ENCODE measurements at regions of chr7 and their contacts with region 1.

Region 1: GRCh38 chr7:92833024-92833765 is 3.2 kb downstream of the CDK6 start:
- DNase-seq: peak; percentile 88
- H3K4me3 ChIP-seq: peak overlapping the region; percentile 88
- H3K27ac ChIP-seq: peak overlapping the region; percentile 87
- H3K4me1 ChIP-seq: peaks cover 42% of the 10 kb centered on the region
- H3K27me3 ChIP-seq: no peaks in the 10 kb centered on the region

Region 2: DNA sequence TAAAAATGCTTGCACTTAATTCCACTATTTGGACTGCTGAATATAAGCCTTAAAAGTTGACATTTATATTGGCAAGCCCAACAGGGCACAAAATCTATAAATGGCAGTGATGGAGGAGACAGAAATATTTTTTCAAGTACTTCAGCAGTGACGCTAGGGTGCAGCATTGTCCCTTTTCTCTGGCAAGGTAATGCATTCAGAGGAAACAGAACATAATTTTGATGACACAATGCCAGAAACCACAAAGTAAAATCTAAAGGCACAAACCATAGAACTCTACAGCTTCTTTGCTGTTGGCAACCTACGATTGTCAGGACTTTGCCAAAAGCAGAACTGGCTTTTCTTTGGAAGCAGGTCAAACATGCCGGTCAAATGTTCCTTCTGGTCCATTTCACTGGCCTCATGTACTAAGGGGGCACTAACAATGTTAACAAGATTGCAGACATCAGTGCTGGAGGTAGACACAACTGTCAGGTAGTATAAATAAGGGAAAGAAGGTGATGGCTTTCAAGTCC is 212.1 kb before region 1 on chr7:
- in situ Hi-C with region 1: loop called (anchors 10 kb)
- DNase-seq: peak; percentile 89
- H3K4me3 ChIP-seq: no peak overlapping the region
- H3K27ac ChIP-seq: peak overlapping the region; percentile 7; the same call in 1 of the 2 replicates
- H3K4me1 ChIP-seq: peaks cover 25% of the 10 kb centered on the region
- H3K27me3 ChIP-seq: no peaks in the 10 kb centered on the region

Region 3: GRCh38 chr7:92691578-92691977 is 141.6 kb before region 1 on chr7:
- in situ Hi-C with region 1: loop called (anchors 10 kb)
- DNase-seq: peak; percentile 77
- H3K4me3 ChIP-seq: no peak overlapping the region
- H3K27ac ChIP-seq: no peak overlapping the region
- H3K4me1 ChIP-seq: peaks cover 21% of the 10 kb centered on the region
- H3K27me3 ChIP-seq: no peaks in the 10 kb centered on the region

Region 4: DNA sequence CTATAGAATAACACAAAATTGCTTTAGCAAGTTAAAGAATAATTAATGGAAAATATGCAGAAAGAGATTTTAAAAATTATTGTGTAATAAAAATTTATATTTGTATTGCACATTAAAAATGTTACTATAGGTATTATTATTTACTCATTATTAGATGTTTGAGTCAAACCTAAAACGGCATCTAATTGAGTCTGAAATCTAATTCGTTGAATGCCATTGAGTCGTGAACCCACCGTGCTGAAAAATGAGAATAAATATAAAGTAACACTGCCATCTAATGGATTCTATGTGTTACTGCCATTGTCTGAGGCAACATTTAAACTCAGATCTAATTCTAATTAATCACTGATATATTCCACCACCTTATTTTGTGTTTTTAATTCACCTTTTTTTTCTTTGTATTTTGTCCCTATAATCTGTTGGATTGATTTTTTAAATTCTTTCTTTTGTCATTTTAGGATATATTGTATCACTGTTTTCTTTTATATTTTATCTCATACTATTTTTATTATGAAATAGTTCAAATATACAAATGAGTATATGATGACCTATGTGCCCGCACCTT is 222.4 kb after region 1 on chr7:
- in situ Hi-C with region 1: loop called (anchors 10 kb)
- DNase-seq: peak; percentile 70
- H3K4me3 ChIP-seq: no peak overlapping the region
- H3K27ac ChIP-seq: no peak overlapping the region
- H3K4me1 ChIP-seq: no peaks in the 10 kb centered on the region
- H3K27me3 ChIP-seq: no peaks in the 10 kb centered on the region

Region 5: GRCh38 chr7:93902777-93903423 is 1069.7 kb after region 1 on chr7:
- in situ Hi-C with region 1: no loop called
- DNase-seq: peak; percentile 51
- H3K4me3 ChIP-seq: no peak overlapping the region
- H3K27ac ChIP-seq: no peak overlapping the region
- H3K4me1 ChIP-seq: no peaks in the 10 kb centered on the region
- H3K27me3 ChIP-seq: no peaks in the 10 kb centered on the region

Measured in GM23248 (cell line).